ENCODE measurements at regions of chr17 and their contacts with region 1.

Region 1: DNA sequence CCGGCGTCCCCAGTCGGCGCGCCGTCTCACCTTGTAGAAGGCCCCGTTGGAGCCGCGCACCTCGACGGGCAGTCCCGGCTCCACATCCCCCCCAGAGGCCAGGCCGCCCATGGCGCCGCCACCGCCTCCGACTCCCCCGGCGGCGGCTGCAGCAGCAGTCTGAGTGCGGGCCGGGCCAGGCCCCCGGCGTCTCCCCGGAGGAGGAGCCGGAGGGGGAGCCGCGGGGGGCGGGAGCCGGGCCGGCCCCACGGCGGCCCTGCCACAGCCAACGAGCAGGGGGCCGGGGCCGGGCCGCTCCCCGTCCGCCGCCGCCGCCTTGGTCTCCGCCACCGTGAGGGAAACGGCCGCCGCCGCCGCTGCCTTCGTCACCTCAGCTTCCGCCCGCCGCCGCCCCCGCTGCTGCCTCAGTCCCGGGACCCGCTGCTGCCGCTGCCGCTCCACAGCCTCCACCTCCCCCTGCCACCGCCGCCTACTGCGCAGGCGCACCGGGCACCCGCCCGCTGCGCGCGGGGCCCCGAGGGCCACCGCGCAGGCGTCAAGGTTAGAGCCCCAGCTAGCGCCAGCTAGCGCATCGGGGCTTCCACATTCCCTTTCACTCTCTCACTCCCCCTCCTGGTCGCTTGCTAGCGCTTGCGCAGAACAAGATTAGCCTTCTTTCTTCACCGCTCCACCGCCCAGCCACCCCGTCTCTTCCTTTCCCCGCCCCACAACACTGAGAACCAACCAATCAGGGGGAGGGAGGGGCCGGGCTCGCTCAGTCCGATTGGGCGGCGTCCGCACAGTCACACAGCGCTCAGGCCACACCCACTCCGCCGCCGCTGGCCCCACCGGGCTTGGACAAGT is at the start of gene FXR2:
- DNase-seq: peak; percentile 94 to 100 (median 98)
- ATAC-seq: peak; percentile 88
- H3K4me3 ChIP-seq: peak within 1 kb of the TSS; percentile 87
- H3K4me3 Mint-ChIP-seq: peak within 1 kb of the TSS; percentile 91
- H3K27ac ChIP-seq: peak within 1 kb of the TSS; percentile 50 to 63
- H3K27ac Mint-ChIP-seq: peak within 1 kb of the TSS; percentile 99
- H3K4me1 ChIP-seq: peaks cover 36% of the 10 kb centered on the region
- H3K4me1 Mint-ChIP-seq: peaks cover 47% of the 10 kb centered on the region
- H3K27me3 ChIP-seq: no peaks in the 10 kb centered on the region
- H3K27me3 Mint-ChIP-seq: no peaks in the 10 kb centered on the region
- CTCF ChIP-seq: peak; percentile 59
- total RNA-seq, gene FXR2: 20.6 to 22.5 TPM

Region 2: GRCh38 chr17:7323731-7324437 is 290.8 kb before region 1 on chr17:
- CTCF ChIA-PET with region 1: no interaction called
- POLR2A ChIA-PET with region 1: no interaction called
- intact Hi-C with region 1: no loop called
- DNase-seq: peak; percentile 45 to 79 (median 64)
- ATAC-seq: peak; percentile 52
- H3K4me3 ChIP-seq: no peak overlapping the region
- H3K4me3 Mint-ChIP-seq: peak overlapping the region; percentile 42
- H3K27ac ChIP-seq: no peak overlapping the region
- H3K27ac Mint-ChIP-seq: no peak overlapping the region
- H3K4me1 ChIP-seq: peaks cover 27% of the 10 kb centered on the region
- H3K4me1 Mint-ChIP-seq: peaks cover 16% of the 10 kb centered on the region
- H3K27me3 ChIP-seq: no peaks in the 10 kb centered on the region
- H3K27me3 Mint-ChIP-seq: no peaks in the 10 kb centered on the region
- CTCF ChIP-seq: peak; percentile 88

Region 3: GRCh38 chr17:7367083-7367482 is 247.6 kb before region 1 on chr17:
- CTCF ChIA-PET with region 1: no interaction called
- POLR2A ChIA-PET with region 1: no interaction called
- intact Hi-C with region 1: no loop called
- DNase-seq: no peak
- ATAC-seq: no peak
- H3K4me3 ChIP-seq: no peak overlapping the region
- H3K4me3 Mint-ChIP-seq: no peak overlapping the region
- H3K27ac ChIP-seq: no peak overlapping the region
- H3K27ac Mint-ChIP-seq: no peak overlapping the region
- H3K4me1 ChIP-seq: no peaks in the 10 kb centered on the region
- H3K4me1 Mint-ChIP-seq: no peaks in the 10 kb centered on the region
- H3K27me3 ChIP-seq: no peaks in the 10 kb centered on the region
- H3K27me3 Mint-ChIP-seq: no peaks in the 10 kb centered on the region
- CTCF ChIP-seq: no peak

Region 4: DNA sequence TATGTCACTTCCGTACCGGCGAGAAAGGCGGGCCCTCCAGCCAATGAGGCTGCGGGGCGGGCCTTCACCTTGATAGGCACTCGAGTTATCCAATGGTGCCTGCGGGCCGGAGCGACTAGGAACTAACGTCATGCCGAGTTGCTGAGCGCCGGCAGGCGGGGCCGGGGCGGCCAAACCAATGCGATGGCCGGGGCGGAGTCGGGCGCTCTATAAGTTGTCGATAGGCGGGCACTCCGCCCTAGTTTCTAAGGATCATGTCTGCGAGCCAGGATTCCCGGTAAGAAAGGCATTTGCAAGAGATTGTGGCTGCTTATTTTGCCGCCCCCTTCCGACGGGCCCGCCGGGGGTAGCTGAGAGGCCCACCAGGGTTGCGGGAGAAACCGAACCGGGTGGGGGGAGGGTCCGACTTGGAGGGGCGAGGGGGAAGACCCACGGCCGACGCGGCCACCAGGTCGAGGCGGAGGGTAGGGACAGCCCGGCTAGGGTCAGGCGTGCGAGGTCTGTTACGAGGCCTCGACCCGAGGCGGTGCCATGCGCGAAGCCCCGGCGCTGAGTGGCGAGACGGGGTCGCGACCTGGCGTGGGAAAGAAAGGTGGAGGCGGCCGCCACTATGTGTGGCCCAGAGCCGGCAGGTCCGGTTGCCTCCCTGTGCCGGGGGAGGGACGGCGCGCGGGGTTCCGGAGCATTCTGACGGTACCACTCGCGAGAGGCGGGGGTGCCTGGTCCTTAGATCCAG is 41.9 kb before region 1 on chr17:
- CTCF ChIA-PET with region 1: interaction called, 4 read pairs
- POLR2A ChIA-PET with region 1: interaction called, 23 read pairs
- intact Hi-C with region 1: loop called (anchors 2 kb)
- DNase-seq: peak; percentile 99 to 100 (median 100)
- ATAC-seq: peak; percentile 83
- H3K4me3 ChIP-seq: peak overlapping the region; percentile 100
- H3K4me3 Mint-ChIP-seq: peak overlapping the region; percentile 99
- H3K27ac ChIP-seq: peak overlapping the region; percentile 96 to 98
- H3K27ac Mint-ChIP-seq: peak overlapping the region; percentile 99
- H3K4me1 ChIP-seq: peaks cover 50% of the 10 kb centered on the region
- H3K4me1 Mint-ChIP-seq: peaks cover 52% of the 10 kb centered on the region
- H3K27me3 ChIP-seq: no peaks in the 10 kb centered on the region
- H3K27me3 Mint-ChIP-seq: peaks cover 3% of the 10 kb centered on the region
- CTCF ChIP-seq: no peak

Region 5: GRCh38 chr17:7583253-7584109 is 31.2 kb before region 1 on chr17 and contains the start of gene MPDU1:
- CTCF ChIA-PET with region 1: interaction called, 13 read pairs
- POLR2A ChIA-PET with region 1: interaction called, 31 read pairs
- intact Hi-C with region 1: no loop called
- DNase-seq: peak; percentile 89 to 98 (median 94)
- ATAC-seq: peak; percentile 85
- H3K4me3 ChIP-seq: peak within 1 kb of the TSS; percentile 86
- H3K4me3 Mint-ChIP-seq: peak within 1 kb of the TSS; percentile 98
- H3K27ac ChIP-seq: peak within 1 kb of the TSS; percentile 78 to 98
- H3K27ac Mint-ChIP-seq: peak within 1 kb of the TSS; percentile 98
- H3K4me1 ChIP-seq: peaks cover 56% of the 10 kb centered on the region
- H3K4me1 Mint-ChIP-seq: peaks cover 52% of the 10 kb centered on the region
- H3K27me3 ChIP-seq: no peaks in the 10 kb centered on the region
- H3K27me3 Mint-ChIP-seq: no peaks in the 10 kb centered on the region
- CTCF ChIP-seq: no peak
- total RNA-seq, gene MPDU1: 12.0 to 12.9 TPM

Region 6: GRCh38 chr17:7589204-7589868 is 25.3 kb before region 1 on chr17:
- CTCF ChIA-PET with region 1: interaction called, 13 read pairs
- POLR2A ChIA-PET with region 1: interaction called, 31 read pairs
- intact Hi-C with region 1: loop called in 1 of 2 experiments (anchors 2 kb)
- DNase-seq: peak; percentile 47 to 87 (median 62)
- ATAC-seq: peak; percentile 90
- H3K4me3 ChIP-seq: no peak overlapping the region
- H3K4me3 Mint-ChIP-seq: no peak overlapping the region
- H3K27ac ChIP-seq: no peak overlapping the region
- H3K27ac Mint-ChIP-seq: no peak overlapping the region
- H3K4me1 ChIP-seq: peaks cover 31% of the 10 kb centered on the region
- H3K4me1 Mint-ChIP-seq: peaks cover 7% of the 10 kb centered on the region
- H3K27me3 ChIP-seq: no peaks in the 10 kb centered on the region
- H3K27me3 Mint-ChIP-seq: no peaks in the 10 kb centered on the region
- CTCF ChIP-seq: peak; percentile 76

Region 7: DNA sequence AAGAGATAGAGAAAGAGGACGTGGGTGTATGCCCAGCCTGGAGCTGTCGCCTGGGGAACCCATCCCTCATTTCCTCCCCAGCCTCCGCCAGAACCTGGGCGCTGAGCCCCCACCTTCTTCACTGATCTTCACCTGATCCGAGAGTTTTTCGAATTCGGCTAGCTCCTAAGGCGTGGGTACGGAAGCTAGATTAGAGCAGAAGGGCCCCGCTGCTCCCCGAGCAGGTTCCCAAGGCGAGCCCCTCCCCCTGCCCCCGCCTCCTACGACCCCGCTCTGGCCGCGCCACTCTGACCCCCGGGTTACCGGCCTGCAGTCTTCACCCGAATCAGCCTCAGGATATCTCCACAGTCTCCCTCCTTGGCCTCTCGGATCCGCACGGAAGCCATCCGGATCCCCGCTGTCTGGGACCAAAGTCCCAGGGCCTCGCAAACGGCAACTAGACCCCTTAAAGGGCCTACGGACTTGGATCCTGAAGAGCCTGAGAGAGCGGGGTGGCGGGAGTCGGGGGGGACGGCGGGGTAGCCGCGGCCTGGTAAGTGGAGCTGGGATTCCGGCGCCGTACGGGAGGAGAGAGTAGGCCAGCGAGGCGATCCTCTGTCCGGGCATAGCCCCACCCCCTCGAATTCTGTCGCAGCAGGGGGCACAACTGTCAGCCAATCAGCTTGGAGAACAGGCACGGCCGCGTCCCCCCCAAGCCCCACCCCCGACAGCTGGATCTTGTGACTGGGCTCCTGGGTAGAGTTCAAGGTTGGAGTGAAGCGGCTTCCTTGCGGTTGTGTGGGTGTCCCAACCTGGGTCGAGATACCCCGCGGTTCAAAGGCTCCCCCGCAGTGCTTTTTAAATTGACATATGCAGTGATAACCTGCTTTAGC is 12.8 kb after region 1 on chr17 and contains the start of gene SAT2:
- CTCF ChIA-PET with region 1: interaction called, 16 read pairs
- POLR2A ChIA-PET with region 1: interaction called, 60 read pairs
- intact Hi-C with region 1: no loop called
- DNase-seq: peak; percentile 66 to 93 (median 81)
- ATAC-seq: peak; percentile 84
- H3K4me3 ChIP-seq: peak within 1 kb of the TSS; percentile 95
- H3K4me3 Mint-ChIP-seq: peak within 1 kb of the TSS; percentile 95
- H3K27ac ChIP-seq: peak within 1 kb of the TSS; percentile 67 to 72
- H3K27ac Mint-ChIP-seq: peak within 1 kb of the TSS; percentile 82
- H3K4me1 ChIP-seq: peaks cover 21% of the 10 kb centered on the region
- H3K4me1 Mint-ChIP-seq: peaks cover 20% of the 10 kb centered on the region
- H3K27me3 ChIP-seq: no peaks in the 10 kb centered on the region
- H3K27me3 Mint-ChIP-seq: no peaks in the 10 kb centered on the region
- CTCF ChIP-seq: no peak
- total RNA-seq, gene SAT2: 55.7 to 60.3 TPM

Region 8: GRCh38 chr17:7650509-7651096 is 36.0 kb after region 1 on chr17 and contains the start of gene ATP1B2:
- CTCF ChIA-PET with region 1: interaction called, 8 read pairs
- POLR2A ChIA-PET with region 1: interaction called, 19 read pairs
- intact Hi-C with region 1: loop called in 1 of 2 experiments (anchors 1 kb)
- DNase-seq: peak; percentile 56 to 88 (median 69)
- ATAC-seq: peak; percentile 94
- H3K4me3 ChIP-seq: peak within 1 kb of the TSS; percentile 52
- H3K4me3 Mint-ChIP-seq: peak within 1 kb of the TSS; percentile 85
- H3K27ac ChIP-seq: no peak within 1 kb of the TSS
- H3K27ac Mint-ChIP-seq: no peak within 1 kb of the TSS
- H3K4me1 ChIP-seq: peaks cover 23% of the 10 kb centered on the region
- H3K4me1 Mint-ChIP-seq: peaks cover 22% of the 10 kb centered on the region
- H3K27me3 ChIP-seq: peaks cover 27 to 43% of the 10 kb centered on the region in 2 experiments
- H3K27me3 Mint-ChIP-seq: peaks cover 62% of the 10 kb centered on the region
- CTCF ChIP-seq: no peak
- total RNA-seq, gene ATP1B2: 0.17 to 0.69 TPM

Region 9: DNA sequence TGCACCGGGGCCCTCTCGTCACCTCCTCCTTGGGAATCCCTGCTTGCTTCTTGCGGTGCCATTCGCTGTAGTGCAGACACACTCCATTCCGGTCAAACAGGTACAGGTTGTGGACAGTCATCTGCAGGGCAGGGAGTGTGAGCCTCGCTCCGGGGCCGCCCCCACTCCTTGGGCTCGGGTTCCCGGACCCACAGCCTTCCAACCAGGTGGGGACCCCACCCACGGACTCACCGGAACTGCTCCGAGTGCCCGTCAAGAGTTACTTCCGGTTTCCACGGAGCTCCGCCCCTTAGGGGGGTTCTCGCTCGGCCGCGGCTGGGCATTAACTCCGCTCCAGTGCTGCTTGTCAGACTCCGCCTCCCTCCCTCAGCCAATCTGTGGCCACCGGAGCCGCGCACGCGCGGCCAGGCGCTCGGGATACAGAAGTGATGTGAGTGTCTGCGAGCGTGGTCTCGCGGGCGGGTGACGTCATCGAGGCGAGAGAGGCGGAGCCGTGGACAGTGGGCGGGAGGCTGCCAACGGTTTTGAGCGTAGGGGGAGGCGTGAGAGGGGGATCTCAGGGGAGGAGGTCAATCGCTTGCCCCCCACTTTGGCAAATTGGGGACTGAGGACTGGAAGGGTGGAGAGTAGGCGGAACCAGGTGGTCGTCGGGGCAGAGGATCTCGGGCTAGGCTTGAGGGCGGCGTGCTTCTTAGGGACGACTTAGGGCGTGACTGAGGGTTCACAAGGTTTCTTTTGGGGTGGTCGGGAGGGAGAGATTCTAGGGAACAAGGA is 317.3 kb after region 1 on chr17 and contains the starts of genes CNTROB and TRAPPC1:
- CTCF ChIA-PET with region 1: no interaction called
- POLR2A ChIA-PET with region 1: interaction called, 3 read pairs
- intact Hi-C with region 1: loop called in 1 of 2 experiments (anchors 5 kb)
- DNase-seq: peak; percentile 97 to 100 (median 99)
- ATAC-seq: peak; percentile 92
- H3K4me3 ChIP-seq: peak within 1 kb of the TSS; percentile 94
- H3K4me3 Mint-ChIP-seq: peak within 1 kb of the TSS; percentile 97
- H3K27ac ChIP-seq: peak within 1 kb of the TSS; percentile 83
- H3K27ac Mint-ChIP-seq: peak within 1 kb of the TSS; percentile 90
- H3K4me1 ChIP-seq: peaks cover 40% of the 10 kb centered on the region
- H3K4me1 Mint-ChIP-seq: peaks cover 49% of the 10 kb centered on the region
- H3K27me3 ChIP-seq: no peaks in the 10 kb centered on the region
- H3K27me3 Mint-ChIP-seq: no peaks in the 10 kb centered on the region
- CTCF ChIP-seq: no peak
- total RNA-seq, gene CNTROB: 20.6 to 21.9 TPM
- total RNA-seq, gene TRAPPC1: 39.3 to 39.5 TPM